ENCODE measurements at regions of chr6 and their contacts with region 1.

Region 1: DNA sequence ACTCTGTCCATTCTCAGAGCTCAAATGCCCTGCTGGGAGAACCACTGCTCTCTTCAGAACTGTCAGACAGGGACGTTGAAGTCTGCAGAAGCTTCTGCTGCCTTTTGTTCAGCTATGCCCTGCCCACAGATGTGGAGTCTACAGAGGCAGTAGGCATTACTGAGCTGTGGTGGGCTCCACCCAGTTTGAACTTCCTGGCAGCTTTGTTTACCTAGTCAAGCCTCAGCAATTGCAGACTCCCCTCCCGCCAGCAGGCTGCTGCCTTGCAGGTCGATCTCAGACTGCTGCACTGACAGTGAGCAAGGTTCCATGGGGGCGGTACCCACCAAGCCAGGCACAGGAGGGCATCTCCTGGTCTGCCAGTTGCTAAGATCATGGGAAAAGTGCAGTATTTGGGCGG is 21.8 kb upstream of the UFL1 start:
- DNase-seq: peak; percentile 25 to 86 (median 65)
- ATAC-seq: peak; percentile 99
- H3K4me3 Mint-ChIP-seq: peak overlapping the region; percentile 22 to 76 (median 54)
- H3K27ac Mint-ChIP-seq: peak overlapping the region; percentile 75 to 93 (median 84)
- H3K4me1 Mint-ChIP-seq: peaks cover 15 to 41% (median 36%) of the 10 kb centered on the region in 4 donors
- H3K27me3 Mint-ChIP-seq: no peaks in the 10 kb centered on the region

Region 2: GRCh38 chr6:96436393-96436792 is 63.4 kb before region 1 on chr6:
- POLR2A ChIA-PET with region 1: no interaction called
- DNase-seq: no peak
- ATAC-seq: no peak
- H3K4me3 Mint-ChIP-seq: no peak overlapping the region
- H3K27ac Mint-ChIP-seq: no peak overlapping the region
- H3K4me1 Mint-ChIP-seq: no peaks in the 10 kb centered on the region
- H3K27me3 Mint-ChIP-seq: peaks cover 6 to 23% (median 9%) of the 10 kb centered on the region in 5 donors

Region 3: DNA sequence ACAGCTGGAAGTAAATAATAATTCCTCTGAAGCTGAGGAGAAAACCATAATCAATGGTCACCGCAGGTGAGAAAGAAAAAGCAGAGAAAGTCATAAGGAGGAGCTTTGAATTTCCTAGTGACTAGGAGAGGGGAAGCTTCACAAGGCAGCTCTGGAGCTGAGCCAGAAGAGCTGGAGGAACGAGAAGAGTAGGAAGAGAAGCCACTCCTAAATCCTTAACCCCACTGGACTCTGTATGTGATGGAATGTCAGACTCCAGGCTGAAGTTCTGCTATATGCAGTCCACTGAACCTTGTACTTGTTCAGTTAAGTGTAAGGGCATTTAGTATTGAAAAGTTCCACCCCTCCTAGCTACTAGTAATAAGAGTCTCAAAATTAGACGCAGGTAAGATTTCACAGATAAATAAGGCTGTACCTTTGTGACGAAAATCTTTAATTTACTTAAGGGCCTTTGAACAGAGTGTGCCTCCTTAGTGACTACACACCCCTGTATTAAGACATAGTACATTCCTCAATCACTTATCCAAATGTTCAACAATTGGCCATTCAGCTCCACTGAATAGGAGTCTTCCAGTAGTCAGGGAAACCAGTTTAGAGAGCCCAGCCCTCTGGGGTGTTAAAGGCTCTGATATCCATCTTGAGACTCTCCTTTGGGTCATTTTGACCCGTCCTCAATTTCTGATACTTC is 49.6 kb before region 1 on chr6:
- POLR2A ChIA-PET with region 1: no interaction called
- DNase-seq: no peak
- ATAC-seq: no peak
- H3K4me3 Mint-ChIP-seq: no peak overlapping the region
- H3K27ac Mint-ChIP-seq: no peak overlapping the region
- H3K4me1 Mint-ChIP-seq: peaks cover 0 to 1% (median 0%) of the 10 kb centered on the region in 4 donors
- H3K27me3 Mint-ChIP-seq: peaks cover 0 to 2% (median 0%) of the 10 kb centered on the region in 5 donors

Region 4: GRCh38 chr6:96521644-96522464 is 22.1 kb after region 1 on chr6 and contains the start of gene UFL1:
- POLR2A ChIA-PET with region 1: interaction called, 40 read pairs
- DNase-seq: peak; percentile 90 to 97 (median 96)
- ATAC-seq: peak; percentile 89 to 91
- H3K4me3 Mint-ChIP-seq: peak within 1 kb of the TSS; percentile 97 to 100 (median 99)
- H3K27ac Mint-ChIP-seq: peak within 1 kb of the TSS; percentile 99 to 100 (median 100)
- H3K4me1 Mint-ChIP-seq: peaks cover 10 to 50% (median 31%) of the 10 kb centered on the region in 4 donors
- H3K27me3 Mint-ChIP-seq: no peaks in the 10 kb centered on the region
- polyA plus RNA-seq, gene UFL1: 17.9 to 22.6 (median 21.1) TPM

Region 5: GRCh38 chr6:96611342-96611991 is 111.7 kb after region 1 on chr6:
- POLR2A ChIA-PET with region 1: no interaction called
- DNase-seq: no peak
- ATAC-seq: no peak
- H3K4me3 Mint-ChIP-seq: no peak overlapping the region
- H3K27ac Mint-ChIP-seq: no peak overlapping the region
- H3K4me1 Mint-ChIP-seq: peaks cover 0 to 6% (median 0%) of the 10 kb centered on the region in 4 donors
- H3K27me3 Mint-ChIP-seq: peaks cover 0 to 18% (median 1%) of the 10 kb centered on the region in 5 donors

Region 6: DNA sequence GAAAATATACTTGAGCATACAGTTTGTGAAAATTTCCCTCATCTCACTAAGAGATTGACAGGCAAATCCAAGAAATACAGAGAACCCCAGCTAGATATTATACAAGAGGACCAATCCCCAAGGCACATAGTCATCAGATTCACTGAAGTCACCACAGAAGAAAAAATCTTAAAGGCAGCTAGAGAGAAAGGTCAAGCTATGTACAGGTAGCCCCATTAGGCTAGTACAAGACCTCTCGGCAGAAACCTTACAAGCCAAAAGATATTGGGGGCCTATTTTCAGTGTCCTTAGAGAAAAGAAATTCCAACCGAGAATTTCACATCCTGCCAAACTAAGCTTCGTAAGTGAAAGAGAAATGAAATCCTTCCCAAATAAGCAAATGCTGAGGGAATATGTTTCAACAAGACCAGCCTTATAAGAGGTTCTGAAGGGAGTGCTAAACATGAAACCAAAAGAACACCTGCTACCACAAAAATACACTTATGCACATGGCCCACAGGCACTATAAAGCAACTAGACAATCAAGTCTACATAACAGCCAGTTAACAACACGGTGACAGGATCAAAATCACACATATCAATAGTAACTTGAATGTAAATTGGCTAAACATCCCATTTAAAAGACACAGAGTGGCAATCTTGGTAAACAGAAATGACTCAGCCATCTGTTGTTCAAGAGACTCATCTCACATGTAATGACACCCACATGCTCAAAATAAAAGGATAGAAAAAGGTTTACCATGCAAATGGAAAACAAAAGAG is 159.5 kb after region 1 on chr6:
- POLR2A ChIA-PET with region 1: no interaction called
- DNase-seq: no peak
- ATAC-seq: no peak
- H3K4me3 Mint-ChIP-seq: no peak overlapping the region
- H3K27ac Mint-ChIP-seq: no peak overlapping the region
- H3K4me1 Mint-ChIP-seq: no peaks in the 10 kb centered on the region
- H3K27me3 Mint-ChIP-seq: peaks cover 6 to 35% (median 18%) of the 10 kb centered on the region in 5 donors

Measured in naive thymus-derived CD8-positive, alpha-beta T cell (primary cell).